ENCODE measurements at regions of chr17 and their contacts with region 1.

Region 1: GRCh38 chr17:55717898-55718735 is 4.5 kb downstream of the TMEM100 start:
- DNase-seq: peak in 2 of 3 donors; percentile 51 to 93
- ATAC-seq: peak; percentile 61
- H3K4me3 ChIP-seq: no peak overlapping the region
- H3K4me1 ChIP-seq: no peaks in the 10 kb centered on the region
- CTCF ChIP-seq: peak; percentile 50

Region 2: GRCh38 chr17:55601874-55602364 is 116.2 kb before region 1 on chr17:
- intact Hi-C with region 1: loop called in 1 of 2 experiments (anchors 10 kb)
- DNase-seq: peak in 1 of 3 donors; percentile 48
- ATAC-seq: peak; percentile 40
- H3K4me3 ChIP-seq: no peak overlapping the region
- H3K4me1 ChIP-seq: no peaks in the 10 kb centered on the region
- CTCF ChIP-seq: no peak

Region 3: DNA sequence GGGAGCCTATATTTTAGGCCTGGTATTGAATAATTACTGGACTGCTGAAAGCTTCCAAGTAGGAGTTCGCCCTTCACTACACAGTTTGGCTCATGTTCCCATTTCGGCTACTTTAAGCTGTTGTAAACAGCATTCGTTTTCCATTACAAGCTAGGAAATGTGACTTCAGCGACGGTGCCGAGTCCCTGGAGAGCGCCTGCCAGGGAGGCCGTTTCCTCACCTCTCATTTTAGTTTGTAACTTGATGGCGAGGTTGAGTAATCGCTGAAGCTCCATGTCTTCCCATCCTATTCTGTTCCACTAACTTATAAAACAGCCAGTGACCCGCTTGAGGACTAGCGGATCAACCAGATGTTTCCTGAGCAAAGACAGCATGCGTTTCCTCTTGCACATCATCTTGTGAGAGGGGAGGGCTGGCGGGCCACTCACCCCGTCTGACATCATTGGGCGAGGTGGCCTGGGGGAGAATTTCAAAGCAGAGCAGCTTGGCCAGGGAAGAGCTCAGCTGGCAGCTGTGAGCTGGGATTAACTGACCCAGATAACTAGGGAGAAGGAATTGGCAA is 65.6 kb after region 1 on chr17:
- intact Hi-C with region 1: no loop called
- DNase-seq: peak; percentile 37 to 68 (median 37)
- ATAC-seq: peak; percentile 62
- H3K4me3 ChIP-seq: no peak overlapping the region
- H3K4me1 ChIP-seq: no peaks in the 10 kb centered on the region
- CTCF ChIP-seq: no peak

Region 4: GRCh38 chr17:56577843-56578204 is 859.7 kb after region 1 on chr17:
- intact Hi-C with region 1: no loop called
- DNase-seq: no peak
- ATAC-seq: no peak
- H3K4me3 ChIP-seq: no peak overlapping the region
- H3K4me1 ChIP-seq: no peaks in the 10 kb centered on the region
- CTCF ChIP-seq: no peak